Activated CD4-positive, alpha-beta memory T cell treated with anti-CD3 and anti-CD28 coated beads, Interleukin-2, amount 10 ng/mL, durations not matched to agents 7 days and 5 days (primary cell): ENCODE measurements at regions of chr13 and their contacts with region 1.

Region 1: GRCh38 chr13:49278211-49278610 is 30.5 kb downstream of the CDADC1 start:
- DNase-seq: no peak
- H3K4me3 Mint-ChIP-seq: no peak overlapping the region
- H3K27ac Mint-ChIP-seq: no peak overlapping the region
- H3K4me1 Mint-ChIP-seq: no peaks in the 10 kb centered on the region
- H3K27me3 Mint-ChIP-seq: no peaks in the 10 kb centered on the region

Region 2: GRCh38 chr13:49098771-49099512 is 179.3 kb before region 1 on chr13:
- CTCF ChIA-PET with region 1: interaction called, 10 read pairs
- POLR2A ChIA-PET with region 1: no interaction called
- DNase-seq: no peak
- H3K4me3 Mint-ChIP-seq: no peak overlapping the region
- H3K27ac Mint-ChIP-seq: no peak overlapping the region
- H3K4me1 Mint-ChIP-seq: peaks cover 2% of the 10 kb centered on the region
- H3K27me3 Mint-ChIP-seq: no peaks in the 10 kb centered on the region

Region 3: GRCh38 chr13:49240017-49240416 is 38.2 kb before region 1 on chr13:
- CTCF ChIA-PET with region 1: interaction called, 66 read pairs
- POLR2A ChIA-PET with region 1: no interaction called
- DNase-seq: peak; percentile 52
- H3K4me3 Mint-ChIP-seq: no peak overlapping the region
- H3K27ac Mint-ChIP-seq: no peak overlapping the region
- H3K4me1 Mint-ChIP-seq: peaks cover 2% of the 10 kb centered on the region
- H3K27me3 Mint-ChIP-seq: peaks cover 14% of the 10 kb centered on the region

Region 4: DNA sequence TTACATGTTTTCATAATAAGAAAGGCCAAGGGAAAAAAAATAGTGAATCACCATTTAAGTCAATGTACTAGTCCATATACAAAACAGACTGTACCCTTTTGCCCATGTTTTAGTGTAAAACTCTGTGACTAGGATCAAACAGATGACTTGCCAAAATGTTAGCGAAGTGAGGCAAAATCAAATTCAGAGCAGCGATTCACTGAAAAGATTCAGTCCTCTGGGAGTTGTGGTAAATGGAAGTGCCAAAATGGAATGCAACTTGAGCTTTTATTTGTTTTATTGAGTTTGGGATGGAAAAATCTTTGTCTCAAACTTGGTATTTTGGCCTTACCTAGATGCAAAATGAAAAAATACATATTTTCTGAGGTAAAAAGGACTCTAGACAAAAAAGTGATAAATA is 21.4 kb before region 1 on chr13:
- CTCF ChIA-PET with region 1: interaction called, 42 read pairs
- POLR2A ChIA-PET with region 1: no interaction called
- DNase-seq: no peak
- H3K4me3 Mint-ChIP-seq: no peak overlapping the region
- H3K27ac Mint-ChIP-seq: no peak overlapping the region
- H3K4me1 Mint-ChIP-seq: peaks cover 44% of the 10 kb centered on the region
- H3K27me3 Mint-ChIP-seq: no peaks in the 10 kb centered on the region

Region 5: DNA sequence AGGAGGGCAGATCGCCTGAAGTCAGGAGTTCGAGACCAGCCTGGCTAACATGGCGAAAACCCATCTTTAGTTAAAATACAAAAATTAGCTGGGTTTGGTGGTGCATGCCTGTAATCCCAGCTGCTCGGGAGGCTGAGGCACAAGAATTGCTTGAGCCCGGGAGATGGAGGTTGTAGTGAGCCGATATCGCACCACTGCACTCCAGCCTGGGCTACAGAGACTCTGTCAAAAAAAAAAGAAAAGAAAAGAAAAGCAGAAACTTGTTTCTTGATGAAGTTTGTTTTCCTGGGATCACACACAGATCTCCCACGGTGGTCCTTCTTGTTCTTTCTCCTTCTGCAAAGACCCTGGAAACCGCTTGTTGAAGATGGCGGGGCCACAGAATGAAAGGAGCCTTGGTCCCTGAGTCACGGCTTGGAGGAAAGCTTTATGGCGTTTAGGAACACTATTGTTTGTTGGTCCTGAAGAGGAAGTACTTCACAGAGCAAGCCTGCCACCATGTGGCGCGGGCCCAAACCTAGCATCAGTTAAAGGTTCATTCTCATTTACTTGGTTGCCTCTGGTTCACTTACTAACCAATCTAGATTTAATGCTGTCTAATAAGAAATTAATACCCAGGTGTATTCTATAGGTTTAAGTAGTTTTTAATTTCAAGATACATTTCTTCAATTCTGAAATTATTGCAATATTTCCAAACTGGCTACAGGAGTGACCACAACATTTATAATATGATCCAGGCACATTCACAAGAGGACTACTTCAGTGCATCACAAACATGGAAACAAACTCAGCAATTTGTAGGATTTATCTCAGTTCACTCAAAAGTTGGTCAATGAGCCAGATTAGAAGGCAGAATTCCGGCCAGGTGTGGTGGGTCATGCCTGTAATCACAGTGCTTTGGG is 328.8 kb after region 1 on chr13:
- CTCF ChIA-PET with region 1: interaction called, 12 read pairs
- POLR2A ChIA-PET with region 1: no interaction called
- DNase-seq: peak; percentile 86
- H3K4me3 Mint-ChIP-seq: peak overlapping the region; percentile 76
- H3K27ac Mint-ChIP-seq: peak overlapping the region; percentile 62
- H3K4me1 Mint-ChIP-seq: peaks cover 6% of the 10 kb centered on the region
- H3K27me3 Mint-ChIP-seq: peaks cover 2% of the 10 kb centered on the region